Caco-2 (cell line): ENCODE measurements at regions of chr10 and their contacts with region 1.

Region 1: DNA sequence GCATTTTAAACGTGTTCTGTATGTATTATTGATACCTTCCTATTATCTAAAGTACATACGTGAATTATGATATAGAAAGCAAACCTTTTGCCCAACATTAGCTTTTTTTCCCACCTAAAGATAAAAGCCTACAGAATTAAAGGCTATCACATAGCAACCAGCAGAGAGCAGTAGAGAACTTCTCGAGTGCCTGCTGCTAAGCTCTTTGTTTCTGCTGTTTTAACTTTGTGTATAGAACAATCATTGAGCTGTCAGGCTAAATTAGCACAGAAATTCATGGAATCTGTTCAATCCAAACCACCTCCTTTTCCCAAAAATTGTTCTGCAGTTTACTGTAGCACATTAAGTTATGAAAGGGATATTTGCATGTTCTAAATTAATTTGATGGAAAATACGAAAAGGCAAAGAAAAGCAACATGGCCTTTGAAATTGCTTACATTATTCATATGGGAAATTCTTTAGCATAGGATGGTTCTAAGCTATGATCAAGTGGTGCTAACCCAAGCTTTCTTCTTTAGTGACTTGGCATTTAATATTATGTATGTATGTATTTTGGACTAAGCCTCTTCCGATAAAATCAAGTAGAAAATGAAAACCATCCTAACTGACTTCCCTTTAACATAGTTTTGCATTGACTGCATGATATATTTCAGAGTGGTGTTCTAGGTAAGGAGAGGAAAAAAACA is 1288.5 kb downstream of the GATA3 start:
- DNase-seq: peak in 1 of 2 experiments; percentile 46
- H3K4me3 ChIP-seq: no peak overlapping the region
- H3K4me3 Mint-ChIP-seq: no peak overlapping the region
- H3K27ac Mint-ChIP-seq: no peak overlapping the region
- H3K4me1 ChIP-seq: no peaks in the 10 kb centered on the region
- H3K4me1 Mint-ChIP-seq: no peaks in the 10 kb centered on the region
- H3K27me3 ChIP-seq: no peaks in the 10 kb centered on the region
- H3K27me3 Mint-ChIP-seq: peaks cover 10% of the 10 kb centered on the region
- CTCF ChIP-seq: peak; percentile 76 to 85

Region 2: GRCh38 chr10:9294865-9295264 is 48.2 kb before region 1 on chr10:
- CTCF ChIA-PET with region 1: no interaction called
- POLR2A ChIA-PET with region 1: no interaction called
- intact Hi-C with region 1: no loop called
- DNase-seq: no peak
- H3K4me3 ChIP-seq: no peak overlapping the region
- H3K4me3 Mint-ChIP-seq: no peak overlapping the region
- H3K27ac Mint-ChIP-seq: no peak overlapping the region
- H3K4me1 ChIP-seq: no peaks in the 10 kb centered on the region
- H3K4me1 Mint-ChIP-seq: no peaks in the 10 kb centered on the region
- H3K27me3 ChIP-seq: no peaks in the 10 kb centered on the region
- H3K27me3 Mint-ChIP-seq: no peaks in the 10 kb centered on the region
- CTCF ChIP-seq: no peak

Region 3: DNA sequence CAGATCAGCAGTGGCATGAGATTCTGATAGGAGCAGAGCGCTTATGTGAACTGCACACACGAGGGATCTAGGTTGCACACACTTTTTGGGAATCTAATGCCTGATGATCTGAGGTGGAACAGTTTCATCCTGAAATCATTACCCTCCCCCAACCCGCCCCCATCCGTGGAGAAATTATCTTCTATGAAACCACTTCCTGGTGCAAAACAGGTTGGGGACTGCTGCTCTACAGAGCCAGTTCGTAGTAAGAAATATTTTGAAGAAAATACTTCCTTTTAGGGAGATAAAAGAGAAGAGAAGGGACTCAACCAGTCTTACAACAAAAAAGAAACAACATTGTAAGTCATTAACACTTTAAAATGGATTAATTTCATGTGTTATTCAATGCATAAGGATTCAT is 19.7 kb after region 1 on chr10:
- CTCF ChIA-PET with region 1: no interaction called
- POLR2A ChIA-PET with region 1: no interaction called
- intact Hi-C with region 1: no loop called
- DNase-seq: no peak
- H3K4me3 ChIP-seq: no peak overlapping the region
- H3K4me3 Mint-ChIP-seq: no peak overlapping the region
- H3K27ac Mint-ChIP-seq: no peak overlapping the region
- H3K4me1 ChIP-seq: no peaks in the 10 kb centered on the region
- H3K4me1 Mint-ChIP-seq: no peaks in the 10 kb centered on the region
- H3K27me3 ChIP-seq: no peaks in the 10 kb centered on the region
- H3K27me3 Mint-ChIP-seq: peaks cover 10% of the 10 kb centered on the region
- CTCF ChIP-seq: no peak

Region 4: DNA sequence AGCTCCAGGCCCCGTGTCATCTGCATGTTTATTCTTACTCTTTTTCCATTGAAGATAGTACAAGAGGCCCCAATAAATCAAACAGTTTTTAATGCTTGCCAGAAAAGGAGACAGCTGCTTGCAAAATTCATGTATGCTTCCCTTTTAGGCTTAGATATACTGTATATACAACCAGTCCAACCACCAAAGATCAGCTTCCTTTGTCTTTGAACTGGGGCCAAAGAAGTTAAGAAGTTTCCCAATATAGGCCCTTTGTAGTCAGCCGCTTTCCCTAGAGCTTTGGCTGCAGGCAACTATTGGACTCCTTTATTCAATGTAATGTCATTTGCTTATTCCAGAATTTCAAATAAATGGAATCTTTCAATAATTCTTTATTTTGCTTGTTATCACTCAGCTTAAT is 106.5 kb after region 1 on chr10:
- CTCF ChIA-PET with region 1: interaction called, 5 read pairs
- POLR2A ChIA-PET with region 1: no interaction called
- intact Hi-C with region 1: loop called (anchors 10 kb)
- DNase-seq: no peak
- H3K4me3 ChIP-seq: no peak overlapping the region
- H3K4me3 Mint-ChIP-seq: no peak overlapping the region
- H3K27ac Mint-ChIP-seq: no peak overlapping the region
- H3K4me1 ChIP-seq: no peaks in the 10 kb centered on the region
- H3K4me1 Mint-ChIP-seq: no peaks in the 10 kb centered on the region
- H3K27me3 ChIP-seq: no peaks in the 10 kb centered on the region
- H3K27me3 Mint-ChIP-seq: no peaks in the 10 kb centered on the region
- CTCF ChIP-seq: no peak

Region 5: DNA sequence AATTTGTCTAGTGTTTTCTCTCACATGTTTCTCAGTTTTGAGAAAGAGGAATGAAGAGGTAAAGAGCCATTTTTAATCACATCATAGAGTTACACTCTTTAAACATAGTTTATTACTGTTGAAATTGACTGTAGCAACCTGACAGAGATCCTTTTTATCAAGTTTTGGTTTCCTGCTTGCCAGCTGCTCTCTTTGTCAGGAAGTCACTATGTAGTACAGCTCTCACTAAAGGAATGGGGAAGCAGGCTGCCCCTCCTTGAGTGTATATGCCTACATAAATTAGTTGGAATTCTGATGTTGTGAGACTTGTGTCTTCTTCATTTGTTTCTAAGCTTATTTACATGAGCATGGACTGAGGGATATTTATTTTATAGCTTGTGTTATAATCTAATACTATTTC is 400.6 kb after region 1 on chr10:
- CTCF ChIA-PET with region 1: interaction called, 8 read pairs
- POLR2A ChIA-PET with region 1: no interaction called
- intact Hi-C with region 1: loop called (anchors 1 kb)
- DNase-seq: no peak
- H3K4me3 ChIP-seq: no peak overlapping the region
- H3K4me3 Mint-ChIP-seq: no peak overlapping the region
- H3K27ac Mint-ChIP-seq: no peak overlapping the region
- H3K4me1 ChIP-seq: no peaks in the 10 kb centered on the region
- H3K4me1 Mint-ChIP-seq: no peaks in the 10 kb centered on the region
- H3K27me3 ChIP-seq: no peaks in the 10 kb centered on the region
- H3K27me3 Mint-ChIP-seq: peaks cover 3% of the 10 kb centered on the region
- CTCF ChIP-seq: no peak

Region 6: GRCh38 chr10:9863559-9864121 is 520.6 kb after region 1 on chr10:
- CTCF ChIA-PET with region 1: interaction called, 19 read pairs
- POLR2A ChIA-PET with region 1: no interaction called
- intact Hi-C with region 1: loop called (anchors 1 kb)
- DNase-seq: no peak
- H3K4me3 ChIP-seq: no peak overlapping the region
- H3K4me3 Mint-ChIP-seq: no peak overlapping the region
- H3K27ac Mint-ChIP-seq: no peak overlapping the region
- H3K4me1 ChIP-seq: no peaks in the 10 kb centered on the region
- H3K4me1 Mint-ChIP-seq: no peaks in the 10 kb centered on the region
- H3K27me3 ChIP-seq: no peaks in the 10 kb centered on the region
- H3K27me3 Mint-ChIP-seq: no peaks in the 10 kb centered on the region
- CTCF ChIP-seq: no peak